ENCODE measurements at regions of chr1 and their contacts with region 1.

Region 1: DNA sequence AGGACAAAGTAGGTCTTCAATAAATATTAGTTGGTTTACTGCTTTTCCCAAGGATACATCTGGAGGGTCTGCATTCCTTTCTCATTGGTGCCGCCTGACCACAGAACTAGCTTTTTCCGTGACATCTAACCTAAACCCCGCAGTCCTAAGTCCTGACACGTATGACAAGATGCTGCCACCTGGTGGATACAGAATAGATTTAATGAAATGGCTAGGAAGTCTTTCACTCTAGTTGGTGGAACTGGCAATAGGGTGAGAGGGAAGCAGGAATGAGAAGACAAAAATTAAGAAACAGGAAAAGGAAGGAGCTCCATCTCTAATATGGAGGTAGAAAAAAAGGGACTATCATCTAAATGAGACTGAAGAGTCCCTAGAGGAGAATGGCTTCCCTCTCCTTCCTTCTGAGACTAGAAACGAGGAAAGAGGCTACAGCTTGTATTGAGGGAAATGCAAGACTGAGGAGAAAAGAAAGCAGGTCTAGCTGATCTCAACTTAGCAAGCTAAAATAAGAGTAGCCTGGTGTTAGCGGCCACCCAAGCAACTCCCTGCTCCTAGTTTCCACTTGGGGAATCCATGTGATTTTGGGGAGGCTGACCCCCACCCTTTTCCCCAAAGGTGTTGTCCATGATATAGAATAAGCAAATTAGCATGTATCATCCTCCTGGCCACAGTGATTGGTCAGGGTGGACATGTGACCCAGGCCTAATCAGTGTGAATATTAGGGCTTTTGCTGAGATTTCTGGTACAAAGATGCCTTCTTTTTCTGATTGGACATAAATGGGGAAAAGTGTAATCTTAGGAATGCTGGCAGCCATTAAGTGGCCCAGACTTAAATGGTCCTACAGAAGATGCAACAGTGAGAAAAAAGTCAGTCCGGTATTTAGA is 5.9 kb downstream of the RFX5 start:
- DNase-seq: peak in 9 of 10 donors; percentile 25 to 73 (median 54)
- ATAC-seq: peak; percentile 90 to 91
- H3K4me3 Mint-ChIP-seq: peak overlapping the region in 1 of 10 donors; percentile 6
- H3K27ac Mint-ChIP-seq: peak overlapping the region in 8 of 10 donors; percentile 1 to 87 (median 34)
- H3K4me1 Mint-ChIP-seq: peaks cover 12 to 32% (median 28%) of the 10 kb centered on the region in 4 donors
- H3K27me3 Mint-ChIP-seq: no peaks in the 10 kb centered on the region

Region 2: DNA sequence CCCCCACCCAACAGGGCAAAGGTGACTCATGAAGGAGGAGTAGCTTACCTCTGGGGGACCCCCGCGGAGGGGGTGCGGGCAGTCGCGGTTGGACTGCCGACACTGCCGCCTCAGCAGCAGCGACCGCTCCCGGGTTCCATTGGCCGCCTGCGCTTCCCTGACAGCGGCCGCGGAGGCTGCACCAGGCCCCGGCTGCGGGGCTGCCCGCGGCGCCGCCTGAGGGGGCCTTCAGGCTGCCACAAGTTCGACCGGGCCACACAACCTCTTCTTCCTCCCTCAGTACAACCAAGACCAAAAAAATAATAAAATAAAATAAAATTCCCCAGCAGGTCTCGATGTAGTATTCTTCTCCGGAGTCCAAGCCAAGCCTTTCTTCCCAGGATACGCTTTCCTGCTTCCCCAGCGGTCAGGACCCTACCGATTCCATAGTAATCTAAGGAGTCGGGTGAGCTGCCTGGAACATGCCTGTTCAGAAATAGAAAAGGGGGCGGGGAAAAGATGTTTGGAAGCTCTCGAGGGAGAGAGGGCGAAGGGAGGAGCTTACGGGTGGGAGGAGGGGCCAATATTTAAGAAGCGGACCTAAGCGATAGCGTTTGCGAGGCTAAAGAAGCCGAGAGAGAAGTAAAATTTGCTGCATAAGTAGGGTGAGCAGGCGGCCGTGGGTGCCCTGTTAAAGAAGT is 13.7 kb before region 1 on chr1 and contains the start of gene PI4KB:
- POLR2A ChIA-PET with region 1: interaction called, 11 read pairs
- DNase-seq: peak; percentile 72 to 98 (median 90)
- ATAC-seq: peak; percentile 91 to 95
- H3K4me3 Mint-ChIP-seq: peak within 1 kb of the TSS; percentile 93 to 99 (median 97)
- H3K27ac Mint-ChIP-seq: peak within 1 kb of the TSS; percentile 94 to 100 (median 98)
- H3K4me1 Mint-ChIP-seq: peaks cover 24 to 47% (median 45%) of the 10 kb centered on the region in 4 donors
- H3K27me3 Mint-ChIP-seq: no peaks in the 10 kb centered on the region
- polyA plus RNA-seq, gene PI4KB: 42.4 to 63.3 (median 52.3) TPM

Region 3: GRCh38 chr1:151384584-151384983 is 43.5 kb after region 1 on chr1:
- POLR2A ChIA-PET with region 1: no interaction called
- DNase-seq: no peak
- ATAC-seq: no peak
- H3K4me3 Mint-ChIP-seq: no peak overlapping the region
- H3K27ac Mint-ChIP-seq: no peak overlapping the region
- H3K4me1 Mint-ChIP-seq: no peaks in the 10 kb centered on the region
- H3K27me3 Mint-ChIP-seq: no peaks in the 10 kb centered on the region